Activated CD4-positive, alpha-beta T cell treated with anti-CD3 and anti-CD28 coated beads, Interleukin-2, amount 10 ng/mL, durations not matched to agents 24 days and 14 days (primary cell): ENCODE measurements at regions of chr2 and their contacts with region 1.

Region 1: DNA sequence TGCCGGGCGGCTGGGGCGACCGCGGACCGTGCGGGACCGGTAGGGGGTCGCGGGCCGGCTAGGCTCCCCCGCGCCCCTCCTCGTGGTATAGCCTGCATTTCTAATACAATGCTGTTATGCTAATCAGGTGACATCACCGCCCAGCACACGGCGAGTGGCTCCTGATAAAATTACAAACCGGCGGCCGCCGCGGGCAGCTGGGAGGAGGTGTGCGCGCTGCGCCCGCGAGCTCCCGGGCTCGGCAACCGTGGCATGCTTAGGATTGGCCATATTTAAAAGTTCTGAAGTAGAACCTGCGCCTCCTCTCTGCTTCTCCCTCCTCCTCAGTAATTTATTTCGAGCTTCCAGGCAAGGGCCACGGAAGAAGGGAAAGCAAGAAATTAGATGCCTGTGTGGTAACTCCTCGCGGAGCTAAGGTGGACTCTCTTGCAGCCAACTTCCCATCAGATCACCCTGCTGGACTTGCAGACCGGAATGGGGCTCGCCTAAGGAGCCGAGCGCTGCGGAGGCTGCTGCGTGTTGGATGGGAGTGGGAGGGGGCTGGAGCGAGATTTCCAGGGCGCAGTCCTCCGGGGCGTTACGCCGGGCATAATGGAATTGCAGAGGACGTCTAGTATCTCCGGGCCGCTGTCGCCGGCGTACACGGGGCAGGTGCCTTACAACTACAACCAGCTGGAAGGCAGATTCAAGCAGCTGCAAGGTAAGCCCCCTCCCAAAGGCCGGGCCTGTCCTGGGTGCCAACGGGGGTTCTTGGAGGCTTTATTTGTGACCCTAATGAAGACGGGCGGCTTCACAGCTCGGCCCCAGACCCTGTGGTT is 102.3 kb downstream of the SPTBN1 start:
- DNase-seq: peak; percentile 91
- H3K4me3 Mint-ChIP-seq: peak overlapping the region; percentile 95
- H3K27ac Mint-ChIP-seq: peak overlapping the region; percentile 95
- H3K4me1 Mint-ChIP-seq: peaks cover 55% of the 10 kb centered on the region
- H3K27me3 Mint-ChIP-seq: no peaks in the 10 kb centered on the region

Region 2: GRCh38 chr2:54052825-54053718 is 505.3 kb before region 1 on chr2:
- intact Hi-C with region 1: no loop called
- DNase-seq: no peak
- H3K4me3 Mint-ChIP-seq: peak overlapping the region; percentile 48
- H3K27ac Mint-ChIP-seq: peak overlapping the region; percentile 31
- H3K4me1 Mint-ChIP-seq: peaks cover 17% of the 10 kb centered on the region
- H3K27me3 Mint-ChIP-seq: no peaks in the 10 kb centered on the region

Region 3: GRCh38 chr2:54589340-54590215 is 31.2 kb after region 1 on chr2:
- intact Hi-C with region 1: loop called (anchors 2 kb)
- DNase-seq: peak; percentile 83
- H3K4me3 Mint-ChIP-seq: peak overlapping the region; percentile 67
- H3K27ac Mint-ChIP-seq: peak overlapping the region; percentile 85
- H3K4me1 Mint-ChIP-seq: peaks cover 66% of the 10 kb centered on the region
- H3K27me3 Mint-ChIP-seq: no peaks in the 10 kb centered on the region

Region 4: DNA sequence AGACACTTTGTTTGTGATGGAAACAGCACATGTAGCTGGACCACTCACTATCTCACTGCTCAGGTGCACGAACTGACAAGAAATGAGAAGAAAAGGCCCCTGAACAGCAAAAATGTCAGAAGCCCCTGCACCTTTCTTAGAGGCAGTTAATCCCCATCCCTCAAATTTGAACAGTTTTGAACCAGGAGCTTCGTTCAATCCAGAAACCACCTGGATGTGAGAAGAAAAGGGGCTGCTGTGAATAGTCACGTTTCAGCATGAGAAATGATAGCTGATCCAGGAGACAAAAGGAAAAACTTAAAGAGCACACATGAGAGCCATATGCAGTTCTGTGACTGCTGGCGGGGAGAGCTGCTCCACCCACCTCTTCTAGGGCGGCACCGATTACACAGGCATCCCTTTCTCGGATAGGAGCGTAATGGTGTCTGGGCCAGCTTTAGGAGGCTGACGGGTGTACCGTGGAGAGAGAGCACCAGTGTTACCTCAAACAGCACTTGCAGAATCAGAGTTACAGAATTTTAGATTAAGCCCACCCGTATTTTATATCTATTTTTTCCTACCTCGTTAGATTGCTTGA is 48.1 kb after region 1 on chr2:
- intact Hi-C with region 1: loop called (anchors 1 kb)
- DNase-seq: peak; percentile 82
- H3K4me3 Mint-ChIP-seq: peak overlapping the region; percentile 69
- H3K27ac Mint-ChIP-seq: peak overlapping the region; percentile 84
- H3K4me1 Mint-ChIP-seq: peaks cover 77% of the 10 kb centered on the region
- H3K27me3 Mint-ChIP-seq: no peaks in the 10 kb centered on the region

Region 5: GRCh38 chr2:54657664-54658083 is 99.3 kb after region 1 on chr2:
- intact Hi-C with region 1: loop called (anchors 5 kb)
- DNase-seq: peak; percentile 78
- H3K4me3 Mint-ChIP-seq: no peak overlapping the region
- H3K27ac Mint-ChIP-seq: peak overlapping the region; percentile 76
- H3K4me1 Mint-ChIP-seq: peaks cover 19% of the 10 kb centered on the region
- H3K27me3 Mint-ChIP-seq: no peaks in the 10 kb centered on the region